Activated T-helper 2 cell treated with anti-CD3 and anti-CD28 coated beads, Interferon-gamma antibody, Interleukin-2, Interleukin-4, amounts not matched to agents 10 μg/mL and 5 μg/mL and 100 μg/mL, durations not matched to agents 14 hours and 24 hours and 36 hours (primary cell): ENCODE measurements at regions of chr2 and their contacts with region 1.

Region 1: DNA sequence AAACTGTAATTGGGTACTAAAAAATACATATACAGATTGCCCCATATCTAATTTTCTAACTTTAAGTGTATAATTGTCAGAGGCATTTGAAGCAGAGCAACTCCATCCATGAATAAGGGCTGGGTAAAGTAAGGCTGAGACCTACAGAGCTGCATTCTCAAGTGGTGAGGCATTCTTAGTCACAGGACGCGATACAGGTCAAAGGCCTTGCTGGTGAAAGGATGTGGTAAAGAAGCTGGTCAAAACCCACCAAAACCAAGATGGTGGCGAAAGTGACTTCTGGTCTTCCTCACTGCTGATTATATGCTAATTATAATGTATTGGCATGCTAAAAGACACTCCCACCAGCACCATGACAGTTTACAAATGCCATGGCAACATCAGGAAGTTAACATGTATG is 50.0 kb downstream of the SLC8A1 start:
- DNase-seq: no peak
- H3K4me3 Mint-ChIP-seq: no peak overlapping the region
- H3K27ac Mint-ChIP-seq: peak overlapping the region; percentile 43
- H3K4me1 Mint-ChIP-seq: peaks cover 26% of the 10 kb centered on the region
- H3K27me3 Mint-ChIP-seq: no peaks in the 10 kb centered on the region

Region 2: DNA sequence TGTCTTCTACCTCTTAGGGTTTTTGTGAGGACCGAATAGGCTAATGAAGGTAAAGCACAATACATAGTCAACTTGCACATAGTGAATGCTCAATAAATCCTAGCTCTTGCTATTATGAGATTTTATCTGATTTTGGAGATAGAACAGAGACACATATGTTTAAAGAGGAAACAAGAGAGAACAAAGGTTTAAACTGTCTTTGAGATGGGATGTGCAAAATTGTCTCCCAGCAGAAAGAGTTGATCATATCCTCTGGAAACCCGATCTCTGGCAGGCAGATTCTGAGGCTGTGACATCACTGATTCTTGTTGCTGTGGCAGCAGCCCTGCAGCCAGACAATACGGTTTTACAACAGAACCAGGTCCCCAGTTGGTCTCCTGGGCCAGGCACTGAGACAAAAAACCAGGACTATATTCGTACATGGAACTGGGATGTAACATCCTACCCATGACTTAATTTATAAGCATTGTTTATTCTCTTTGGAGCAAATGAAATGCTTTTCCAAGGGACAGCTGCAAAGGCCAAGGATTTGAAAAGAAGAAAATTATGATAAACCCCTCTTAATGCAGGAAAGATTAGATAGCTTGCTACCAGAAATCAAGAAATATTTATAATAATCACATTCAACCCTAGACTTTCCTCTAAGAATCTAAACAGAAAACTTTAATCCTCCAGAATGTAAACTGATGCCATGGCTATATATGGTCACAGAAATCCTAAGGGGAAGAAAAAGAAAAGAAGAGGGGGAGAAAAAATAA is 30.2 kb before region 1 on chr2:
- intact Hi-C with region 1: loop called (anchors 2 kb)
- DNase-seq: no peak
- H3K4me3 Mint-ChIP-seq: no peak overlapping the region
- H3K27ac Mint-ChIP-seq: no peak overlapping the region
- H3K4me1 Mint-ChIP-seq: peaks cover 9% of the 10 kb centered on the region
- H3K27me3 Mint-ChIP-seq: no peaks in the 10 kb centered on the region

Region 3: GRCh38 chr2:40384714-40385113 is 17.2 kb before region 1 on chr2:
- intact Hi-C with region 1: no loop called
- DNase-seq: no peak
- H3K4me3 Mint-ChIP-seq: no peak overlapping the region
- H3K27ac Mint-ChIP-seq: no peak overlapping the region
- H3K4me1 Mint-ChIP-seq: no peaks in the 10 kb centered on the region
- H3K27me3 Mint-ChIP-seq: no peaks in the 10 kb centered on the region